ENCODE measurements at regions of chrX and their contacts with region 1.

Region 1: GRCh38 chrX:138745196-138745595 is 33.7 kb upstream of the FGF13 start:
- DNase-seq: no peak
- ATAC-seq: no peak
- H3K4me3 ChIP-seq: no peak overlapping the region
- H3K27ac ChIP-seq: no peak overlapping the region
- H3K4me1 ChIP-seq: no peaks in the 10 kb centered on the region
- H3K27me3 ChIP-seq: no peaks in the 10 kb centered on the region
- CTCF ChIP-seq: peak in 2 of 3 experiments; percentile 35 to 49; a peak in 4 of 6 replicates
- POLR2A ChIP-seq: no peak
- RAD21 ChIP-seq: peak; percentile 32

Region 2: GRCh38 chrX:136953867-136954787 is 1791.1 kb before region 1 on chrX:
- CTCF ChIA-PET with region 1: no interaction called
- POLR2A ChIA-PET with region 1: no interaction called
- RAD21 ChIA-PET with region 1: no interaction called
- intact Hi-C with region 1: loop called (anchors 10 kb)
- DNase-seq: peak; percentile 40
- ATAC-seq: peak; percentile 91
- H3K4me3 ChIP-seq: no peak overlapping the region
- H3K27ac ChIP-seq: no peak overlapping the region
- H3K4me1 ChIP-seq: no peaks in the 10 kb centered on the region
- H3K27me3 ChIP-seq: no peaks in the 10 kb centered on the region
- CTCF ChIP-seq: peak; percentile 29 to 63 (median 53); a peak in 5 of 6 replicates
- POLR2A ChIP-seq: no peak
- RAD21 ChIP-seq: peak; percentile 41

Region 3: DNA sequence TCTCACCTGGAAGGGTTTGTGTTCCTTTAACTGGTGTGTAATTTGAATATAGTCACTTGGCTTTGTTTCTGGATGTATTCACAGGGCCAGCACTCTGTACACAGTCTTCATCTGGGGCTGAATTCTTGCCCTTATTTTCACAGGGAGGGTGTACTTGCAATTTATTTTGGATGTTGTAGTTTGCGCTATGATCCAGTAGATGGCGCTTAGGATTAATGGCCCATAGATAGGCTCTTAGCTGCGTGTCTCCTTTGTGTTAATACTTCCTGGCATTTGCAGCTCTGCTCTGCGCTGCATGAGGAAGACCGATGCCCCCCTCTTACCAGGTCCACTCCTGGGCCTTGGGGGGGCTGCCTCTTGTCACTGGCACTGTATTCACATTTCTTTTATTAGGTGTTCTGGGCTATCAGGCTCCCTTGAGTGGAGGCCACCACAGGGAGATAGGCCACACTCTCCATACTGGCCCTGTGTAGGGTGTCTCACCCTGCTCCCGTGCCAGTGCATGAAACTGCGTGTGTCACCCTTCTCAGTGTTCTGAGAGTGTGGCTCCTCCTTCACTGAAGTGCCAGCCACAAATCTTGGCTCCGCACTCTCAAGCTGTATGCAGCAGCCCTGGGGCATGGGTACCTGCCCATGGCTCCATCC is 617.0 kb before region 1 on chrX:
- CTCF ChIA-PET with region 1: no interaction called
- POLR2A ChIA-PET with region 1: no interaction called
- RAD21 ChIA-PET with region 1: no interaction called
- intact Hi-C with region 1: loop called (anchors 2 kb)
- DNase-seq: peak; percentile 1
- ATAC-seq: no peak
- H3K4me3 ChIP-seq: no peak overlapping the region
- H3K27ac ChIP-seq: no peak overlapping the region
- H3K4me1 ChIP-seq: no peaks in the 10 kb centered on the region
- H3K27me3 ChIP-seq: no peaks in the 10 kb centered on the region
- CTCF ChIP-seq: peak in 2 of 3 experiments; percentile 21 to 47; a peak in 2 of 6 replicates
- POLR2A ChIP-seq: no peak
- RAD21 ChIP-seq: no peak; the same call in 1 of the 2 replicates

Region 4: GRCh38 chrX:138408101-138408500 is 337.1 kb before region 1 on chrX:
- CTCF ChIA-PET with region 1: no interaction called
- POLR2A ChIA-PET with region 1: no interaction called
- RAD21 ChIA-PET with region 1: no interaction called
- intact Hi-C with region 1: no loop called
- DNase-seq: no peak
- ATAC-seq: no peak
- H3K4me3 ChIP-seq: no peak overlapping the region
- H3K27ac ChIP-seq: no peak overlapping the region
- H3K4me1 ChIP-seq: no peaks in the 10 kb centered on the region
- H3K27me3 ChIP-seq: no peaks in the 10 kb centered on the region
- CTCF ChIP-seq: no peak
- POLR2A ChIP-seq: no peak
- RAD21 ChIP-seq: no peak

Region 5: DNA sequence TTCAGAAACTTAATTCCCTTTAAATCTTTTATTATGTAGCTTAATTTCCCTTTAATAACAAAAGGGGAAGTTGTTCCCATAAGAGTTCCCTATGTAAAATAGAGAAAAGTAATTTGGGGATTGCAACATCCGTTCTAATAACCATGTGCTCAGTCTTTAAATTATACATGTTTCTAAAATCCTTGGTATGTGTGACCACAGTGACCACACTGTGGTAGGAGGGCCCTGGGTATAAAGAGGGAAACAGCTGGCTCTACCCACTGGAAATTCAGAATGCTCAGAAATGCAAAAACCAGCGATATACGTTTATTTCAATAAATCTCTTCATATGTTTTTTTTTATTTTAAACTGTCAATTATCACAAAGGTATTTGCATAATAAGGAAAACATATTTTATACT is 252.8 kb before region 1 on chrX:
- CTCF ChIA-PET with region 1: no interaction called
- POLR2A ChIA-PET with region 1: no interaction called
- RAD21 ChIA-PET with region 1: no interaction called
- intact Hi-C with region 1: no loop called
- DNase-seq: no peak
- ATAC-seq: no peak
- H3K4me3 ChIP-seq: no peak overlapping the region
- H3K27ac ChIP-seq: no peak overlapping the region
- H3K4me1 ChIP-seq: no peaks in the 10 kb centered on the region
- H3K27me3 ChIP-seq: no peaks in the 10 kb centered on the region
- CTCF ChIP-seq: no peak
- POLR2A ChIP-seq: no peak
- RAD21 ChIP-seq: no peak

Region 6: GRCh38 chrX:138765051-138765450 is 19.9 kb after region 1 on chrX:
- CTCF ChIA-PET with region 1: no interaction called
- POLR2A ChIA-PET with region 1: no interaction called
- RAD21 ChIA-PET with region 1: no interaction called
- intact Hi-C with region 1: no loop called
- DNase-seq: no peak
- ATAC-seq: no peak
- H3K4me3 ChIP-seq: no peak overlapping the region
- H3K27ac ChIP-seq: no peak overlapping the region
- H3K4me1 ChIP-seq: no peaks in the 10 kb centered on the region
- H3K27me3 ChIP-seq: no peaks in the 10 kb centered on the region
- CTCF ChIP-seq: no peak
- POLR2A ChIP-seq: no peak
- RAD21 ChIP-seq: no peak

Region 7: DNA sequence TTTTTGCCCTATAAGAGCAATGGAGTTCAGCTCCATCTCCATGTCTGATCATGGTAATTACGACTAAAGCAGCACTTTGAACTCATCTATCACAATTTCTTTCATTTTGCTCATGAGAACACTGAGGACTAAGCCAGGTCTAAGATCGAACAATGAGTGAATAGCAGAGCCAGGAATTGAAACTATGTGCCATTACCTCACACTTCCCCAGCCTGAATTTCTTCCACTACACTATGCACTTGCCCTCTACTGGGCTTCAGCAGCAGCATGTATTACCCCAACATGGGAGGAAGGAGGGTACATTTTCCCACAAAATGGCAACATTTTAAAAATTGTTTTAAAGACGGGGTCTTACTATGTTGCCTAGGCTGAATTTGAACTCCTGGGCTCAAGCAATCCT is 241.0 kb after region 1 on chrX:
- CTCF ChIA-PET with region 1: no interaction called
- POLR2A ChIA-PET with region 1: no interaction called
- RAD21 ChIA-PET with region 1: no interaction called
- intact Hi-C with region 1: no loop called
- DNase-seq: no peak
- ATAC-seq: no peak
- H3K4me3 ChIP-seq: no peak overlapping the region
- H3K27ac ChIP-seq: no peak overlapping the region
- H3K4me1 ChIP-seq: no peaks in the 10 kb centered on the region
- H3K27me3 ChIP-seq: no peaks in the 10 kb centered on the region
- CTCF ChIP-seq: no peak
- POLR2A ChIP-seq: no peak
- RAD21 ChIP-seq: no peak

Measured in HCT116 (cell line).